PC-9 (cell line): ENCODE measurements at regions of chr10 and their contacts with region 1.

Region 1: GRCh38 chr10:50937230-50937907 is 51.9 kb upstream of the A1CF start:
- DNase-seq: no peak
- H3K4me3 ChIP-seq: no peak overlapping the region
- H3K27ac ChIP-seq: no peak overlapping the region
- H3K4me1 ChIP-seq: no peaks in the 10 kb centered on the region
- H3K27me3 ChIP-seq: no peaks in the 10 kb centered on the region
- CTCF ChIP-seq: peak; percentile 62

Region 2: DNA sequence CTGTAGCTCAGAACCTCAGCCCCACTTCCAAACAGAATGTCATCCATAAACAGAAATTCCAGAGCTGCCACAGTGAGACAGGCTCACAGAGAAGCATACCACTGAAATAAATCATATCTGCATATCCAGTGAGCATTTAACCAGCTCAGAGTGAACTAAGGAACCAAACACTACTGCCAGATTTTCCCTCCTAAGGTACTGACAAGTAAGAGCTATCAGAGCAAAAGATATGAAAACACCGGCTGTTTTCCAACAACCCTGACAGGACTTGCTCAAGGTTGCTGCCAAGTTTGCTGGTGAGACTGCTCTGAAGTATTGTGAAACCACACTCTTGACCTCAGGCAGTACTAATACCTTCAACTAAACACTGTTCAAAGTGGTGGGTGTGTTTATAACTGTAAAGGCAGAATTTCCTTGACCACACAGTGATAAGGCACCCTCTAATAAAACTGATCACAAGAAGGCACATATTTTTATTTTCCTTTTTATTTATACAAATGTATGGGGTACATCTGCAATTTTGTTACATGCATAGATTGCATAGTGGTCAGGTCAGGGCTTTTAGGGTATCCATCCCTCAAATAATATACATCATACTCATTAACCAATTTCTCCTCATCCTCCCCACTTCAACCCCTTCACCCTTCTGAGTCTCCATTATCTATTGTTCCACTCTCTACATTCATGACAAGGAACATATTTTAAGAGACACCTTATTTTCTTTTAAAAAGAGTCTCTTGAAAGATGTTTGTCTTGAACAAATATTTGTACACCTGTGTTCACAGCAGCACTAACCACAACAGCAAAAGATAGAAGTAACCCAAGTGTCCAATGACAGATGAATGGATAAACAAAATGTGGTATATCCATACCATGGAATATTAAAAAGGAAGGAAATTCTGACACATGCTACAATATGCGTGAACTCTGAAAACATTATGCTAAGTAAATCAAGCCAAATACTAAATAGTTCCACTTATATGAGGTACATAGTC is 331.8 kb before region 1 on chr10:
- CTCF ChIA-PET with region 1: no interaction called
- POLR2A ChIA-PET with region 1: no interaction called
- intact Hi-C with region 1: no loop called
- DNase-seq: peak; percentile 60 to 92
- H3K4me3 ChIP-seq: no peak overlapping the region; the same call in 1 of the 2 replicates
- H3K27ac ChIP-seq: peak overlapping the region; percentile 53
- H3K4me1 ChIP-seq: peaks cover 45% of the 10 kb centered on the region
- H3K27me3 ChIP-seq: no peaks in the 10 kb centered on the region
- CTCF ChIP-seq: no peak

Region 3: DNA sequence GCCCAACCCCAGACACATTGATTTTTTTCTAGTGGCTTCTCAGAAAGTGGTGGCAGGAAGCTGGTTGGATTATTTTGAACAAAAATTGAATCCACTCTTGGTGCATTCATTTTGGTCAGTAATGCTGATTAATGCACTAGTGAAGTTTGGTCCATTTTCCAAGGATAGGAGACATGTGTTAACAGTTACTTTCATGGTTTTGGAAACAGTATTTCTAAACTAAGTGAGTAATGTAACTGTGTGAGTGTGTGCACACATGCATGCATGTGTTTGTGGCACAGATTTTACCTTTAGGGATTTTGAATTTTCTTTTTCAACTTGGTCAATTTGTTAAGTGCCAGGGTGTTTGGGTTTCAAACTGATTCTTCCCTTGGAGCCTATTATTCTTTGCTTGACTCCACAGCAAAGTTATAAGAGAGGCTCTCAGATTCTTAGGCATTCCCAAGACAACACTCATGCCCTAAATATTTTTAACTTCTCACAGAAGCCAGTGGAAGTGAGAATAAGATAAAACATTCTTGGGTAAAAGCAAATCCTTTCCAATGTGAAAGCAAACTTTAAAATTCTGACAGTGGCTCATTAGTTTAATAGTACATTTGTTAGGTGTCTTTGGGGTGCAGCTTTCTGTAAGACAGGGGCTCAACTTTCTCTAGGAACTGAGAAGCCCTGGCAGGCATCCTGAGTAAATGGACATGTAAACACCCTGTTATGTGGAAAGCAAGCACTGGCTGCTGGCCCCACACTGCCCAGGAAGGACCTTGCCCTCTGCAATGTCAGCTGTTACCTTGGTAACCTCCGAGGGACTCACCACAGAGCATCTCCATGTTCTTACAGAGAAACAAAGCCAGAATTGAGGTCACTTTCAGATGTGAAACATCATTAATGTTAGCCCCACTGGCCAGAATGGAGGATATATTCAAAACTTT is 129.3 kb before region 1 on chr10:
- CTCF ChIA-PET with region 1: no interaction called
- POLR2A ChIA-PET with region 1: no interaction called
- intact Hi-C with region 1: loop called (anchors 10 kb)
- DNase-seq: no peak
- H3K4me3 ChIP-seq: no peak overlapping the region
- H3K27ac ChIP-seq: no peak overlapping the region
- H3K4me1 ChIP-seq: no peaks in the 10 kb centered on the region
- H3K27me3 ChIP-seq: peaks cover 5% of the 10 kb centered on the region; the same call in 1 of the 2 replicates
- CTCF ChIP-seq: no peak

Region 4: DNA sequence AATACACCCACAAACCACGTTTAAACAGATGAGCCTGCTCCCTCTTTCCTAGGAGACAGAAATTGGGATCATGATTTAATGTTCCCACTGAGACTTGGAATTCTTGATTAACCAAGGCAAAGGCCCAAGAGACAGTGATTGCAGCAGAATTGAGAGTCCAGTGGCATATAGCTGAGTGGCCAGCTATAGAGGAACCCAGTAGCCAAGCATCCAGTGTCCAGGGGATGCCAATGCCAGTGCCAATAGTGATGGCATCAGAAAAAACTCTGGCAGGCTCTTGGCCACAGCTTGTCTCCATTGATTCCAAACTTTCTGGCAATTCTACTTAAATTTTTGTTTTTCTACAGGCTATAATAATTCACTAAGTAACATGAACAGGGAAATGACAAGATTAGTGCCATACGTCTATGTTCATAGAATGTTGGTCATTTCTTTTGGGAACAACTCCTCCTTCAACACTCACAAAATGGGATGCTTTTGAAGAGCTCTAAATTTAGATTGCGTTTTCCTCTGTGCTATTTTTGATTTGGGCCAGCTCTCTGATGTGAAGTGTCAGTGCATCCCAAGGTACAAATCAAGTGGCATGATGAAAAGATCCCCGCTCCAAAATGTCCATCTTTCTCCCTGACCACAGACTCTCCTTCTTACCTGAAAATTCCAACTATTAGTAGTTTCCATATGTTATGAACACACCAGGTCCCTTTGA is 31.2 kb after region 1 on chr10:
- CTCF ChIA-PET with region 1: no interaction called
- POLR2A ChIA-PET with region 1: no interaction called
- intact Hi-C with region 1: no loop called
- DNase-seq: no peak
- H3K4me3 ChIP-seq: no peak overlapping the region
- H3K27ac ChIP-seq: no peak overlapping the region
- H3K4me1 ChIP-seq: no peaks in the 10 kb centered on the region
- H3K27me3 ChIP-seq: no peaks in the 10 kb centered on the region
- CTCF ChIP-seq: no peak